ENCODE measurements at regions of chr15 and their contacts with region 1.

Region 1: DNA sequence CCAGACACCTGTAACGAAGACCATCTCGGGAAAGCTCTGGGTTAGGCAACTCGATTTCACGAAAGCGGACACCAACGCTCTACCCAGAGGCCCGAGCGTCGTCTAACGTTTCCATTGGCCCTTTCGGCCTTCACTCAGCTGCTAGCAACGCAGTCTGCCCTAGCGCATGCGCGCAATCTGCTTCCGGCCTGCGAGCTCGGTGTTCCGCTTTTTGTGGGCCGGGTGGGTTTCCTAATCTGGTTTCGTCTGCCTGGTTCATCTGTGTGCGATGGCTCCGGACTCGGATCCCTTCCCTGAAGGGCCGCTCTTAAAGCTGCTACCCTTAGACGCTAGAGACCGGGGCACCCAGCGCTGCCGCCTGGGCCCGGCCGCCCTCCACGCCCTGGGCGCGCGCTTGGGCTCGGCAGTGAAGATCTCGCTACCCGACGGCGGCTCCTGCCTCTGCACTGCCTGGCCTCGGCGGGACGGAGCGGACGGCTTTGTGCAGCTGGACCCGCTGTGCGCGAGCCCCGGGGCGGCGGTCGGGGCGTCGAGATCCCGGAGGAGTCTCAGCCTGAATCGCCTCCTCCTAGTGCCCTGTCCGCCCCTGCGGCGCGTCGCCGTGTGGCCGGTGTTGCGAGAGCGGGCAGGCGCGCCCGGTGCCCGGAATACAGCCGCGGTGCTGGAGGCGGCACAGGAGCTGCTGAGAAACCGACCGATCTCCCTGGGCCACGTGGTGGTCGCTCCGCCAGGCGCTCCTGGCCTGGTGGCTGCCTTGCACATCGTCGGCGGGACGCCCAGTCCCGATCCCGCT is 24.0 kb upstream of the GATM start:
- DNase-seq: peak; percentile 95 to 98
- ATAC-seq: peak; percentile 98 to 99 (median 98)
- H3K4me3 ChIP-seq: peak overlapping the region; percentile 70 to 96 (median 92)
- H3K27ac ChIP-seq: peak overlapping the region; percentile 61 to 95 (median 92)
- H3K4me1 ChIP-seq: peaks cover 0 to 33% (median 28%) of the 10 kb centered on the region in 9 donors
- H3K27me3 ChIP-seq: no peaks in the 10 kb centered on the region
- CTCF ChIP-seq: peak in 1 of 9 donors; percentile 4

Region 2: DNA sequence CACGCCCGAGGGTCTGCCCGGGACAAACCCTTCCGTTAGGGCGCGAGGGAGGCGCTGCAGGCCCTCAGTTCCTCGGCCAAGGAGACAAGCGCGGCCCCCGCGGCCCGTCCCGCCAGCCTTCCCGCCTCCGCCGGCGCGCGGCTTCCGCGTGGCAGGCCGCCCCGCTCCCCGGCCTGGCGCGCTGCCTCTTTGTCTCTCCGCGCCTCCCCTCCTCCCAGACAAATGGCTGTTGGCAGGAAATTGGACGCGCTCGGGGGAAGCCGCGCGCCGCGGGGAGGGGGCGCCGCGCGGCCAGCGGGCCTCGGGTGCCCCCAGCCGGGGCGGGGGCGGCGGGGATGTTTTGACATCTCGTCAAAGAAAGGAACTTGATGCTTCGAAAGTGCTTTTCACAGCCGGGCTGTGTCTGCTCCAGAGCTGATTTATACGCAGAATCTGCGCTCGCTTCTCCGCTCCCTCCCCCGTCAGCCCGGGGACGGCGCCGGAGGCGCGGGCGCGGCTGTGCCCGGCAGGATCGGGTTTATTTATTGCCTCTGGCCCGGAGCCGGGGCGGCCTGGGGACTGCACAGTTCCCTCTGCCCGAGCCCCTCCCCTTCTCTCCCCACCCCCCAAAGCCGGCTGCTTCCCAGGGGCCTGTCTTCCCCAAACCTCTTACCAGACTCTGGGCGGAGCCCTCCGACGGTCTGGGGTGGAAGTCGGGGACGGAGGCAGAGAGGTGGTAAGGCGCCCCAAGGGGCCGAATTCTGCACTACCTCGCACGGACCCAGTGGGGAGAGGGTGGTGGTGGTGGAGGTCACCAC is 235.3 kb before region 1 on chr15:
- intact Hi-C with region 1: loop called in 9 of 10 experiments (anchors 2 to 10 kb)
- DNase-seq: peak; percentile 86 to 89
- ATAC-seq: peak; percentile 81 to 90 (median 86)
- H3K4me3 ChIP-seq: peak overlapping the region; percentile 42 to 92 (median 78)
- H3K27ac ChIP-seq: peak overlapping the region; percentile 97 to 100 (median 99)
- H3K4me1 ChIP-seq: peaks cover 0 to 42% (median 19%) of the 10 kb centered on the region in 9 donors
- H3K27me3 ChIP-seq: no peaks in the 10 kb centered on the region
- CTCF ChIP-seq: peak in 8 of 9 donors; percentile 53 to 72 (median 64)

Region 3: GRCh38 chr15:45198337-45199135 is 203.8 kb before region 1 on chr15:
- intact Hi-C with region 1: loop called in 7 of 10 experiments (anchors 2 to 5 kb)
- DNase-seq: peak; percentile 86 to 98
- ATAC-seq: peak; percentile 79 to 89 (median 84)
- H3K4me3 ChIP-seq: peak overlapping the region; percentile 30 to 80 (median 72)
- H3K27ac ChIP-seq: peak overlapping the region; percentile 85 to 99 (median 96)
- H3K4me1 ChIP-seq: peaks cover 0 to 45% (median 9%) of the 10 kb centered on the region in 9 donors
- H3K27me3 ChIP-seq: no peaks in the 10 kb centered on the region
- CTCF ChIP-seq: peak; percentile 39 to 90 (median 70)

Region 4: GRCh38 chr15:45307230-45307924 is 95.0 kb before region 1 on chr15:
- intact Hi-C with region 1: loop called (anchors 1 to 5 kb)
- DNase-seq: peak in 1 of 2 donors; percentile 16
- ATAC-seq: peak in 7 of 8 donors; percentile 42 to 72 (median 59)
- H3K4me3 ChIP-seq: peak overlapping the region in 6 of 10 donors; percentile 16 to 36 (median 22)
- H3K27ac ChIP-seq: peak overlapping the region in 3 of 10 donors; percentile 2 to 36 (median 16)
- H3K4me1 ChIP-seq: peaks cover 0 to 12% (median 0%) of the 10 kb centered on the region in 9 donors
- H3K27me3 ChIP-seq: peaks cover 0 to 12% (median 3%) of the 10 kb centered on the region in 7 donors
- CTCF ChIP-seq: peak in 8 of 9 donors; percentile 36 to 76 (median 64)

Region 5: GRCh38 chr15:45372041-45372995 is 30.0 kb before region 1 on chr15:
- intact Hi-C with region 1: no loop called
- DNase-seq: no peak
- ATAC-seq: no peak
- H3K4me3 ChIP-seq: no peak overlapping the region
- H3K27ac ChIP-seq: no peak overlapping the region
- H3K4me1 ChIP-seq: peaks cover 0 to 71% (median 11%) of the 10 kb centered on the region in 9 donors
- H3K27me3 ChIP-seq: peaks cover 0 to 14% (median 0%) of the 10 kb centered on the region in 7 donors
- CTCF ChIP-seq: no peak

Region 6: DNA sequence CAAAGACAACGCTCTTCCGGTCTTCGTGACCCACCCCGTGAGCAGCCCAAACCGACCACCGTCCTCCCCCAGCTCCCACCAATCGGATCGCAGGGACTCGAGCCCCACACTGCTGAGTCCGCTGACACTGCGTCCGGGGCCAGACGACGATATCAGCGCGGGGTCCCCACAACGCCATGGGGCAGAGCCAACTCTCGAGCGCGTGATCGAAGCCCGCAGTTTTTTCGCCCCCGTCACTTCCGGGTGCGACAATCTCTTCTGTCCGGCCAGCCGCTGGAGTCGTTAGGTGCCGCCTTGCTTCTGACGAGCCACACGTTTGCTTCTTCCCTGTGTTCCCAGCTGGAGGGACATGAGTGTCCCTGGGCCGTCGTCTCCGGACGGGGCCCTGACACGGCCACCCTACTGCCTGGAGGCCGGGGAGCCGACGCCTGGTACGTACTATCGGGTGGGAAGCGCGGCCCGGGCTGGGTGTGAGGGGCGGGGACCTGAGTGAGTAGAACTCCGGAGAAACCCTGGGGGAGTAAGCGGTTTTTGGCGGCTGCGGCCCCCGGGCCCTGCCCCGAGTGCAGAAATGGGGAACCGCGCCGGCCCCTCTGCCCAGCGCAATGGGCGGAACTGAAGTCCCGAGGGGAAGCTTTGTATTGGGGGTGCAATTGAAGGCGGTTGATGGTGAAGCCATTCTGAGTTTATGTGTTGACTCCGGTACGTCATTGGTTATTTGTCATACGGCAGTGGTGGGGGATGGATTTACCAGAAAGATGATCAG is 184.9 kb after region 1 on chr15 and contains the start of gene BLOC1S6:
- intact Hi-C with region 1: loop called in 1 of 10 experiments (anchors 5 kb)
- DNase-seq: peak; percentile 87 to 94
- ATAC-seq: peak; percentile 90 to 96 (median 94)
- H3K4me3 ChIP-seq: peak within 1 kb of the TSS; percentile 72 to 99 (median 80)
- H3K27ac ChIP-seq: peak within 1 kb of the TSS; percentile 95 to 99 (median 97)
- H3K4me1 ChIP-seq: peaks cover 10 to 64% (median 49%) of the 10 kb centered on the region in 9 donors
- H3K27me3 ChIP-seq: peaks cover 0 to under 1% (median 0%) of the 10 kb centered on the region in 7 donors
- CTCF ChIP-seq: peak in 1 of 9 donors; percentile 13
- total RNA-seq, gene BLOC1S6: 24.8 to 33.9 (median 28.5) TPM

Measured in heart right ventricle (tissue), 16 donors.